Right cardiac atrium (tissue), 5 donors: ENCODE measurements at regions of chr17 and their contacts with region 1.

Region 1: DNA sequence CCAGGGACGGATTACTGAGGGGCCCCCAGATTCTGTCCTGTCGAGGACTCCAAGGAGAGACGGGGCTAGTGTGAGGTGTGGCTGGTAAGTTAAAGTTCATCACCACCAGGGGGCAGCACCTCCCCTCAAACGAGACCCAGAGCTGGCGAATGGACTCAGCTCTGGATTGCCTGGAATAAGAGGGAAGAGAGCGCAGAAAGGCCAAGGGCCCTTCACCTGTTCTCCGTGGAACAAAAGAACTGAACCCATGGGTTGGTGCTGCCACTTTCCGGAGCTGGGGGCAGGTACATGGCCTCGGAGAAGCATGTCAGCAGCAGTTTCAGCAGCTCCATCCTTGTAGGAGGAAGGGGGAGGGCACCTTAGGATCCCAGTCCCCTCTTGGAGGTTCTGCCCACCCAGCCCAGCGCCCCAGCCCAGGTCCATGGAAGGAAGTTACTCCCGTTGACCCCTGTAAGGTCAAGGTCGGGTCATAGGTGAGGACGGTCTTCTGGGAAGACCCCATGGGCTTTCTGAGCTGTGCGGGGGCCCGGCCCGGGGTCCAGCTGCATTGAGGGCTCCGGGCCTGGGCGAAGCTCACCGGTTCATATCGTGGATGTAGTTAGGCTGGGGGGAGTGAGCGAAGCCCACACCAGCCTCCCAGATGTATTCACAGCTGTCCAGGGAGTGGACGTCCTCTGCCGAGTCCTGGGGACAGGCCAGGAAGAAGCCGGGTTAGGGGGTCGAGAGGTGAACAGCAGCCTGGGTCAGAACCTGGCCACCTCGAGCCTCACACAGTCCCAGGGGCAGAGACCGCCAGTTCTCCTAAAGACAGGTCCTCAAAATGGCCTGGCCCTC is 10.7 kb downstream of the HID1 start:
- DNase-seq: peak; percentile 88 to 93 (median 91)
- ATAC-seq: peak; percentile 80 to 84
- H3K4me3 ChIP-seq: no peak overlapping the region
- H3K27ac ChIP-seq: no peak overlapping the region
- H3K4me1 ChIP-seq: no peaks in the 10 kb centered on the region
- H3K27me3 ChIP-seq: no peaks in the 10 kb centered on the region

Region 2: GRCh38 chr17:74748529-74749365 is 213.1 kb before region 1 on chr17 and contains the start of gene NHERF1:
- intact Hi-C with region 1: loop called in 1 of 4 experiments (anchors 5 kb)
- DNase-seq: peak in 2 of 3 donors; percentile 98 to 99
- ATAC-seq: peak; percentile 97
- H3K4me3 ChIP-seq: peak within 1 kb of the TSS; percentile 73
- H3K27ac ChIP-seq: peak within 1 kb of the TSS; percentile 53
- H3K4me1 ChIP-seq: peaks cover 6% of the 10 kb centered on the region
- H3K27me3 ChIP-seq: no peaks in the 10 kb centered on the region
- total RNA-seq, gene NHERF1: 6.1 to 11.6 (median 9.7) TPM

Region 3: GRCh38 chr17:74790161-74791054 is 171.5 kb before region 1 on chr17:
- intact Hi-C with region 1: loop called in 1 of 4 experiments (anchors 5 kb)
- DNase-seq: no peak
- ATAC-seq: peak in 1 of 2 donors; percentile 4
- H3K4me3 ChIP-seq: no peak overlapping the region
- H3K27ac ChIP-seq: no peak overlapping the region
- H3K4me1 ChIP-seq: no peaks in the 10 kb centered on the region
- H3K27me3 ChIP-seq: no peaks in the 10 kb centered on the region

Region 4: GRCh38 chr17:74907012-74907411 is 54.9 kb before region 1 on chr17:
- intact Hi-C with region 1: no loop called
- DNase-seq: no peak
- ATAC-seq: no peak
- H3K4me3 ChIP-seq: no peak overlapping the region
- H3K27ac ChIP-seq: no peak overlapping the region
- H3K4me1 ChIP-seq: no peaks in the 10 kb centered on the region
- H3K27me3 ChIP-seq: no peaks in the 10 kb centered on the region

Region 5: DNA sequence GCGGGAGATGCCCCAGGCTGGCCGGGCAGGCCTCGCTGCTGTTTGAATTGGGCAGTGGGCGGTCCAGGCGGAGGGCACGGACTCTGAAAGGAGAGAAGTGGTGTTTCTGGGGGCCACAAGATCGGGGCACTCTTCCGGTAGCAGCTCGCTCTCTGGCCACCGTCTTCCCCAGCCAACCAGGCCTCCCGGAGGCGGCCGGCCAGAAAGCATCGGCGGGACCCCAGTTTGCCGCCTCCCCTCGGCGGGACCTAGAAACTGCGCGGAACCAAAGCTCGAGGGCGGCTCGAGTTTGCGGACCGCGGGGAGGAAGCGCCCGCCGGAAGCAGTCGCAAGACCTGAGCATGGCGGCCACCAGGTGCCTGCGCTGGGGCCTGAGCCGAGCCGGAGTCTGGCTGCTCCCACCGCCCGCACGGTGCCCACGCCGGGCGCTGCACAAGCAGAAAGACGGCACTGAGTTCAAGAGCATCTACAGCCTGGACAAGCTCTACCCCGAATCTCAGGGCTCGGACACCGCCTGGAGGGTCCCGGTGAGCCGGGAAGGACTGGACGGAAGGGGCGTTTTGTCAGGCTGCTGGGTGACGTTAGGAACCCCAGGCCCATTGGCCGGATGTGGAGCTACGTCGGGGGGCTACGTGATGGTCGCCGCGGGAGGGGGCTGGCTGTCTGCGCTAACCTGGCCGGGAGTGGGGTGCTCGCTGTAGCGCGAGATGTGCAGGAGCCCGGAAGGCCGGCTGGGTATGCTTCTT is 50.6 kb after region 1 on chr17 and contains the start of gene MRPL58:
- intact Hi-C with region 1: loop called in 1 of 4 experiments (anchors 5 kb)
- DNase-seq: peak; percentile 86 to 94 (median 94)
- ATAC-seq: peak; percentile 94 to 95
- H3K4me3 ChIP-seq: peak within 1 kb of the TSS; percentile 70
- H3K27ac ChIP-seq: peak within 1 kb of the TSS; percentile 61
- H3K4me1 ChIP-seq: peaks cover 2% of the 10 kb centered on the region
- H3K27me3 ChIP-seq: no peaks in the 10 kb centered on the region
- total RNA-seq, gene MRPL58: 35.1 to 44.6 (median 37.3) TPM

Region 6: GRCh38 chr17:75024686-75025397 is 63.0 kb after region 1 on chr17:
- intact Hi-C with region 1: loop called in 1 of 4 experiments (anchors 10 kb)
- DNase-seq: no peak
- ATAC-seq: no peak
- H3K4me3 ChIP-seq: no peak overlapping the region
- H3K27ac ChIP-seq: no peak overlapping the region
- H3K4me1 ChIP-seq: no peaks in the 10 kb centered on the region
- H3K27me3 ChIP-seq: no peaks in the 10 kb centered on the region

Region 7: GRCh38 chr17:75199886-75200618 is 238.2 kb after region 1 on chr17:
- intact Hi-C with region 1: loop called in 2 of 4 experiments (anchors 5 to 10 kb)
- DNase-seq: no peak
- ATAC-seq: no peak
- H3K4me3 ChIP-seq: no peak overlapping the region
- H3K27ac ChIP-seq: no peak overlapping the region
- H3K4me1 ChIP-seq: no peaks in the 10 kb centered on the region
- H3K27me3 ChIP-seq: no peaks in the 10 kb centered on the region

Region 8: GRCh38 chr17:75205037-75205792 is 243.3 kb after region 1 on chr17 and contains the start of gene NUP85:
- intact Hi-C with region 1: loop called in 2 of 4 experiments (anchors 5 to 10 kb)
- DNase-seq: peak; percentile 96 to 98 (median 98)
- ATAC-seq: peak; percentile 96 to 97
- H3K4me3 ChIP-seq: peak within 1 kb of the TSS; percentile 95
- H3K27ac ChIP-seq: peak within 1 kb of the TSS; percentile 91
- H3K4me1 ChIP-seq: no peaks in the 10 kb centered on the region
- H3K27me3 ChIP-seq: no peaks in the 10 kb centered on the region
- total RNA-seq, gene NUP85: 31.3 to 36.1 (median 34.2) TPM